PC-3 (cell line): ENCODE measurements at regions of chr2 and their contacts with region 1.

Region 1: DNA sequence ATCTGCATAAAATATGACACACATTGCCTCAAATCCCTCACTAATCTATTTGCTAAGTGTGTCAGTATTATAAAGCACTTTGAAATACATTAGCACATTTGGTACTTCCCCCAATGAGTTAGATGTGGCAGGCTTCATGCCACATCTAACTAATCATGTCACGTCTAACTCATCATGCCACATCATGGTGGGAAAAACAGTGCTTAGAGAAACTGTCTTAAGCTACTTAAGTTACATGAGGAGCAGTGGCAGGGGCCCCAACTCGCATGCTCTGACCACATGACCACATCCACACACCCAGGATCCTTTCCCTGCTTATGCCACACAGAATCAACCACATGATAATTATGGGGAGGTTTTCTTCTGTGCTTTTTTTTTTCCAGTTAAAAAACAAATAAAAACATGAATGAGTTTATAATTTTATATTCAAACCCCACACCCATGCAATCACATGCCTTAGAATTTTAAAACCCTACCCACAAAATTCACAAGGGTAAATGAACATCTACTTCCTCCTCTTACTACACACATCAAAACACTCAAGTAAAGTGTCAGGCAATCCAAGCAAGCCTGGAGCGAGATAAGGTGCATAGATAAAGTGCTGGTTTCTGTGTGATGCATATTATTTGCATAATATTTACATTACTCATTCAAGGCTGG is 1.6 kb downstream of the ABCA12 start:
- DNase-seq: peak; percentile 46
- ATAC-seq: peak; percentile 62
- H3K4me3 ChIP-seq: peak overlapping the region; percentile 13; the same call in 1 of the 2 replicates
- H3K27ac ChIP-seq: peak overlapping the region; percentile 69
- H3K4me1 ChIP-seq: peaks cover 26% of the 10 kb centered on the region
- H3K27me3 ChIP-seq: no peaks in the 10 kb centered on the region
- CTCF ChIP-seq: no peak

Region 2: GRCh38 chr2:215028231-215028630 is 108.6 kb before region 1 on chr2:
- CTCF ChIA-PET with region 1: no interaction called
- POLR2A ChIA-PET with region 1: no interaction called
- intact Hi-C with region 1: loop called (anchors 5 kb)
- DNase-seq: peak; percentile 64
- ATAC-seq: peak; percentile 99
- H3K4me3 ChIP-seq: no peak overlapping the region
- H3K27ac ChIP-seq: no peak overlapping the region
- H3K4me1 ChIP-seq: peaks cover 10% of the 10 kb centered on the region; the same call in 1 of the 2 replicates
- H3K27me3 ChIP-seq: no peaks in the 10 kb centered on the region
- CTCF ChIP-seq: no peak

Region 3: DNA sequence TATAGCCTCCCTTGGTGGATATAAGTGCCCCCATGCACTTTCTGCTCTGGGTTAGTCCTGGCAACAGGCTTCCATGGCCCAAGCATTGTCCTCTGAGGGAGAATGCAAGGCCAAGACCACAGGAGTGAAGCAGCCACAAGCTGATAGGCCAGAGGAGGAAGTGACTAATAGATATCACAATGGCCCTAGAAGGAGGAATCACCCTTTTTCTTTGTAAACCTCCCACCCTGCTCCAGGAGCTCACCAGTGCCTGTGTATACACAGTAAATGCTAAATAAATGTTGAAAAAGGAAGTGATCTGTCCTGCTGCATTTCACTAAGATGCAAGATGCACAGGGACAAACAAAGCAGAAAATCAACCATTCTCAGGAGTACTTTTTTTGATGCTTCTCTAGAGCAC is 51.3 kb after region 1 on chr2:
- CTCF ChIA-PET with region 1: no interaction called
- POLR2A ChIA-PET with region 1: no interaction called
- intact Hi-C with region 1: no loop called
- DNase-seq: peak; percentile 15
- ATAC-seq: peak; percentile 85
- H3K4me3 ChIP-seq: no peak overlapping the region
- H3K27ac ChIP-seq: no peak overlapping the region
- H3K4me1 ChIP-seq: no peaks in the 10 kb centered on the region
- H3K27me3 ChIP-seq: no peaks in the 10 kb centered on the region
- CTCF ChIP-seq: no peak